ENCODE measurements at regions of chr1 and their contacts with region 1.

Region 1: DNA sequence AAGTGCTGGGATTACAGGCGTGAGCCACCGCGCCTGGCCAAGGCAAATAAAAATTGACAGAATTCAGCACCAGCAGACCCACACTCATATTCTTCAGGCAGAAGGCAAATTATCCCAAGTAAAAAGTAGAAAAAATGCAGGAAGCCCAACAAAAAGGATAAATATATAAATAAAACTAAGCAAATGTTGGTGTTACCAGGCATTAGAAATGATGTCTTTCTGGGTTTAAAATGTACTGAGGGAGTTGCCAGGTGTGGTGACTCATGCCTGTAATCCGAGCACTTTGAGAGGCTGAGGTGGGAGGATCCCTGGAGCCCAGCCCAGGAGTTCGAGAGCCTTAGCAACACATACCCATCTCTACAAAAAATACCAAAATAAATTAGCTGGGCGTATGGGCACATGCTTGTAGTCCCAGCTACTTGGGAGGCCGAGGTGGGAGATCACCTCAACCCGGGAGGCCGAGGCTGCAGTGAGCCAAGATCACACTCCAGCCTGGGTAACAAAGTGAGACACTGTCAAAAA is 6.3 kb downstream of the INTS11 start:
- DNase-seq: peak; percentile 94
- H3K4me3 Mint-ChIP-seq: peak overlapping the region; percentile 19
- H3K27ac Mint-ChIP-seq: peak overlapping the region; percentile 84
- H3K4me1 Mint-ChIP-seq: peaks cover 11% of the 10 kb centered on the region
- H3K27me3 Mint-ChIP-seq: no peaks in the 10 kb centered on the region
- CTCF ChIP-seq: no peak

Region 2: DNA sequence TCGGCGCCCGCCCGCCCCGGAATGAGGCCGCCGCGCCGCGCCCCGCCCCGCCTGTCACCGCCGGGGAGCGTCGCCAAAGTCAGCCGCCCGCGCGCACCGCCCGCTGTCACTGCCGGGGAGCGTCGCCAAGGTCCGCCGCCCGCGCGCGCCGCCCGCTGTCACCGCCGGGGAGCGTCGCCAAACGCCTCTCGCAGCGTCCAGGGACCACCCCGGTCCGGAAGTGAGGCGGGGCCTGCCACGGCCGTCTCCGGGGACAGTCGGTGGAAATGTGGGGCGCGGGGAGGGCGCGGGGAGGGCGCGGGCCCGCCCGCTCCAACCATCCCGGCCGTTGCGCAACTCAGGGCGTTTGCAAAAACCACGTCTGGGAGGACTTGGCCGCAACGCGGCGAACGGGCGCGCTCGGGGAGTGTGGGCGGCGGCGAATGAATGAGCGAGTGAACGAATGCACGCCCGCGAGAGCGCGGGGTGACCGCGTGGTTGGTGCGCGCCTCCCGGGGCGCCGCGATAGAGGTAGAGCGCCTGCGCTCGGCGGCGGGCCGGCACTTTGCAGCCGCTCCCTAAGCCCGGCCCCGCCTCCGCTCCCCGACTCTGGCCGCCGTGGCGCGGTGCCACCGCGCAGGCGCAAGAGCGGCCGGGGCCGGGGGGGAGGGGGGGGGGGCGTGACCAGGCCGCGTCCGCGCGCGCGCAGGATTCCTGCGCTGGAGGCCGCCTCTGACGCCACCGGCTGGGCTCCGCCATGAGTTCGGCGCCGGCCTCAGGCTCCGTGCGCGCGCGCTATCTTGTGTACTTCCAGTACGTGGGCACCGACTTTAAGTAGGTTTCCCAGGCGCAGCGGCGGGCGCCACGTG is 10.1 kb before region 1 on chr1 and contains the starts of genes ACAP3 and PUSL1:
- CTCF ChIA-PET with region 1: no interaction called
- POLR2A ChIA-PET with region 1: interaction called, 12 read pairs
- intact Hi-C with region 1: no loop called
- DNase-seq: peak; percentile 90
- H3K4me3 Mint-ChIP-seq: peak within 1 kb of the TSS; percentile 81
- H3K27ac Mint-ChIP-seq: peak within 1 kb of the TSS; percentile 63
- H3K4me1 Mint-ChIP-seq: peaks cover 23% of the 10 kb centered on the region
- H3K27me3 Mint-ChIP-seq: no peaks in the 10 kb centered on the region
- CTCF ChIP-seq: no peak
- total RNA-seq, gene ACAP3: 31.5 and 33.5 TPM in 2 replicates
- total RNA-seq, gene PUSL1: 15.9 and 27.4 TPM in 2 replicates